Left ventricle myocardium inferior (tissue), 1 donor: ENCODE measurements at regions of chr1 and their contacts with region 1.

Region 1: DNA sequence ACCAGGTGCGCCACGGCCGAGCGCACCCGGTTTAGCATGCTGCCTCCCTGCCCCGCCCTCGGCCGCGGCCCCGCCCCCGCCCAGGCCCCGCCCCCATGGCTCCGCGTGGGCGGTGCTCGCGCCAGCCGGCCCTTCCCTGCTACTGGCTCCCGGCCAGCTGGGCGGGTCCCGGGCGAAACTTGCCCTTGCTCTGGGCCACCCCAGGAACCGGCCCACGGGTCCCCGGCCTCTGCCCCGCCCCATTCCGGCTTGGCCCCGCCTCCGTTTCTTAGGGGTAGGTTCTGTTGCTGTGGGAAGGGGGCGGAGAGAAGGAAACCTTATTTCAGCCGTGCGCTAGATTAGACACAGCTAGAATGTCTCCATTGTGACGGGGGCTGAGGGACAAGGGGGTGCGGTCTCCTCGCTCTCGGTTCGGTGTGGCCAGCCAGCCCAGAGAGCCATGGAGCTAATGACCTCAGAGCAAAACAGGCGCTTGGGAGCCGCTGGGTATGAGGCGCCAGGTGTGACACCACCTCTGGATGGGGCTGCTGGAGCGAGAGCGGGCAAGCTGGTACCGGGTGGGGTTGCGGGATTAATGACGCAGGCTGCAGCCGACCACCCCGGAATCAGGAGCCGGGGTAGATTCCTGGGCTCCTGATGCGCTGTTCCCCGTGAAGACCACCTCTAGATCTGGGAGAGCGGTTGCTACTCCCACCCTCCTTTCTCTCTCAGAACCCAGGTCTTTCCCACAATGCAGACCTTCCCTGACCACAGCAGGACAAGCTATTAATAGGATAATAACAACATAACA is at the start of gene PPM1J:
- DNase-seq: peak; percentile 99
- H3K4me3 ChIP-seq: peak within 1 kb of the TSS; percentile 84
- H3K27ac ChIP-seq: peak within 1 kb of the TSS; percentile 83
- H3K4me1 ChIP-seq: peaks cover 32% of the 10 kb centered on the region
- H3K27me3 ChIP-seq: peaks cover 16% of the 10 kb centered on the region
- CTCF ChIP-seq: no peak
- total RNA-seq, gene PPM1J: 5.4 TPM

Region 2: GRCh38 chr1:112803906-112804762 is 88.7 kb after region 1 on chr1:
- intact Hi-C with region 1: loop called (anchors 5 kb)
- DNase-seq: peak; percentile 52
- H3K4me3 ChIP-seq: no peak overlapping the region
- H3K27ac ChIP-seq: no peak overlapping the region
- H3K4me1 ChIP-seq: no peaks in the 10 kb centered on the region
- H3K27me3 ChIP-seq: no peaks in the 10 kb centered on the region
- CTCF ChIP-seq: peak; percentile 78